PC-3 (cell line): ENCODE measurements at regions of chr3 and their contacts with region 1.

Region 1: DNA sequence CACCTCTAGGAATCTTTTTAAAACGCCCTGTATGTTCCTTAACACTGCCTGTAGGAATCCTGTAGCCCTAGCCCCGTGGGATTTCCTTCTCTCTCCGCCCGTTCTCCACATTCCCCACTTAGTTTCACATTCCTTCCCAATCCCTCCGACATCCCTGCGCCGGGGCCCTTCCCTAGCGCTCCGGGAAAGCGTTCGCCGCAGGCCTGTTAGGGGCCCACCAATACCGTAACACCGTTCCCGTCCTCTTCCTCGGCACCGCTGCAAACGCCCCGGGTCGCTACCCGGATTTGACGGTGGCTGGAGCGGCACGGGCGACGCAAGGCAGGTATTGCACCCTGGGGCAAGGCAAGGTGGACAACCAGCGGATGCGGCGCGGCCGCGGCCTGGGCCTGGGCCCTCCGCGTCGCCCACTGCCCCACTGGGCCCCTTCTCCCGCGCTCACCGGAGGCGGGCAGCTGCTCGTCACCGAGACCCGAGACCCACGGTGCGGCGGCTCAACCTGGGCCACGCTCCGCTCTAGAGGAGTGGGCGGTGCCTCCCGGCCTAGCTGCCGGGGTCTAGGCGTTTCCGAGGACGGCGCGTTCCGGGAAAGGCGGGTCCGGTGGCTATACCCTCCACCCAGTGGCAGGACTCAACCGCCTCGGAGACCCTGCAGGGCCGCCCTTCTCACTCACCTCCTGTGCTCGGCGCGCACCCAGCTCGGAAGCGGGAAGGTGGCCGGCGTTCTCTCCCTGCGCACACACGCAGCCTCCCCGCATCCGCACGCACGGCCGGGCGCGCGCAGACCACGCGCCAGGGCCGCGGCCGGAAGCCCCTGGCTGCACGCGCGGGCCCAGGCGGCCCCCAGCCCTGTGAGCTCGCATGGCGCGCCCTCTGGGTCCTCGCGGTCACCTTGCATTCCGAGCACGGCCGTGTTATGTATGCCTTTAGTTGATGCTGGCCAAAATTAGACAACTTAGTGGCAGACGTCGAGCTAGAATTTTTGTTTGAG is at the start of gene B3GALNT1:
- DNase-seq: peak; percentile 65
- ATAC-seq: peak; percentile 72
- H3K4me3 ChIP-seq: peak within 1 kb of the TSS; percentile 89
- H3K27ac ChIP-seq: peak within 1 kb of the TSS; percentile 55
- H3K4me1 ChIP-seq: peaks cover 72% of the 10 kb centered on the region
- H3K27me3 ChIP-seq: no peaks in the 10 kb centered on the region
- CTCF ChIP-seq: no peak
- total RNA-seq, gene B3GALNT1: 110 and 125 TPM in 2 replicates

Region 2: DNA sequence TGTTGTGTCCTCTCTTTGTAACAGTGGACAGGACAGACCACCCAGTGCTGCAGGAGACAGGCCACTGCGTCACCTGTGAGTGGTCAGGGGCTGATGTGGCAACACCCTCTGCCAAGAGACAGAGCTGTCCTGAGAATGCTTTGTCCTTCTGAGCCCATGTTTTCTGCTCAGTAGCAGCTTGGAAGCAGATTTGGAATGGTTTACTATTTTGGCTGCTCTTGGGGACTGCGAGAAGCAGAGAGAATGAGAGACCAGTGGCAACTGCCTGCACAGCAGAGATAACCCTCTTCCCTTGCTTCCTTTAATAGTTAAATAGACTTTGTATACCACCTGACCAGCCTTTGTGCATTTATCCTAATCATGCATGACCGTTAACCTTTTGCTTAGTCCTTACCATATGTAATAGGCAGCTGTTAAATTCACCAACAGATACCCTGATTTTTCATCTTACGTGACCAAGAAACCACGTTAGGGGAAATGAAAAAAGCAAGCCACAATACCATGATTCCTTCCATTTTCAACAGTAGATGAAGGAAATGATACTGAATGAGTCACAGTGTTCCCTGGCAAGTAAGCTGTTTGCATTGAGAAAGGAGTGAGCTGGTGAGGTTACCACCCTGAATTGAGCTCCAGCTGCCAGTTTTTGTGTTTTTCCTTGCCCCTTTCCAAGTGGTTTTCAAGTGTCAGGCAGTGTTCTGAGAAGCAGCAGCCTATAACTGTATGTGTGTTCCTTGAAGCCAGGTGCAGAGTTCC is 35.2 kb before region 1 on chr3:
- CTCF ChIA-PET with region 1: no interaction called
- POLR2A ChIA-PET with region 1: no interaction called
- intact Hi-C with region 1: loop called (anchors 1 kb)
- DNase-seq: peak; percentile 97
- ATAC-seq: peak; percentile 82
- H3K4me3 ChIP-seq: peak overlapping the region; percentile 28
- H3K27ac ChIP-seq: peak overlapping the region; percentile 98
- H3K4me1 ChIP-seq: peaks cover 45% of the 10 kb centered on the region
- H3K27me3 ChIP-seq: no peaks in the 10 kb centered on the region
- CTCF ChIP-seq: no peak

Region 3: DNA sequence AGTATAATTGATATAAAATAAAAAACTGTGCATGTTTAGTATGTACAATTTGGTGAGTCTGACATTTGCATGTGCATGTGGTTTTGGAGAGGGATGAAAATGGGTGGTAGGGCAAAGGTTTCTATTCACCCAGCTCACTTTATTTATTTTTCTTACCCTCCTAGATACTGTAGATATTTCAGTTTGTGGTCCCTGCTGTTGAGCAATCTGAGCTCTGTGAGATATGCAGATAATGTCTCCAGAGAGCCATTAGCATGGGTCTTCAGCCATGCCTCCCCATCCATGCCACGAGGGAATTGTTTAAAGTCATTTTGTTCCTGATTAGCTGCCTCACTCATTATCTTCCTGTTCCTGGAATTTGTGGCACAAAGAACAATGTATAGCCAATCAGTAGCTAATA is 44.7 kb after region 1 on chr3:
- CTCF ChIA-PET with region 1: no interaction called
- POLR2A ChIA-PET with region 1: no interaction called
- intact Hi-C with region 1: loop called (anchors 5 kb)
- DNase-seq: peak; percentile 80
- ATAC-seq: peak; percentile 55
- H3K4me3 ChIP-seq: peak overlapping the region; percentile 52
- H3K27ac ChIP-seq: peak overlapping the region; percentile 97
- H3K4me1 ChIP-seq: peaks cover 32% of the 10 kb centered on the region
- H3K27me3 ChIP-seq: no peaks in the 10 kb centered on the region
- CTCF ChIP-seq: no peak